Calu3 (cell line): ENCODE measurements at regions of chr6 and their contacts with region 1.

Region 1: DNA sequence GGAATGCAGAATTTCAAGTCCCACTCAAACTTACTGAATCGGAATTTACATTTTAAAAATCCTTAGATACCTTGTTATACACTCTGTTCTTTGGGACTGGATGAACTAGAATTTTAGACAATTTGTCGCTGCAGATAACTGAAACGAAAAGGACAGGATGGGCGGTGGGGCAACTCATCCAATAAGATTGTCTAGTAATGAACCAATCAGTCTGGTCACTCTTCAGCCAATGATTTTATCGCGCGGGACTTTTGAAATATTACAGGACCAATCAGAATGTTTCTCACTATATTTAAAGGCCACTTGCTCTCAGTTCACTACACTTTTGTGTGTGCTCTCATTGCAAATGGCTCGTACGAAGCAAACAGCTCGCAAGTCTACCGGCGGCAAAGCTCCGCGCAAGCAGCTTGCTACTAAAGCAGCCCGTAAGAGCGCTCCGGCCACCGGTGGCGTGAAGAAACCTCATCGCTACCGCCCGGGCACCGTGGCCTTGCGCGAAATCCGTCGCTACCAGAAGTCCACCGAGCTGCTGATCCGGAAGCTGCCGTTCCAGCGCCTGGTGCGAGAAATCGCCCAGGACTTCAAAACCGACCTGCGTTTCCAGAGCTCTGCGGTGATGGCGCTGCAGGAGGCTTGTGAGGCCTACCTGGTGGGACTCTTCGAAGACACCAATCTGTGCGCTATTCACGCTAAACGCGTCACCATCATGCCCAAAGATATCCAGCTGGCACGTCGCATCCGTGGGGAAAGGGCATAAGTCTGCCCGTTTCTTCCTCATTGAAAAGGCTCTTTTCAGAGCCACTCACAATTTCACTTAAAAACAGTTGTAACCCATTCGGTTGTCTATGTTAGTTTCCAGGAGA is 41.9 kb upstream of the HFE start:
- DNase-seq: peak; percentile 81
- H3K4me3 Mint-ChIP-seq: peak overlapping the region; percentile 81
- H3K27ac Mint-ChIP-seq: peak overlapping the region; percentile 95
- H3K4me1 Mint-ChIP-seq: peaks cover 30% of the 10 kb centered on the region
- H3K27me3 Mint-ChIP-seq: no peaks in the 10 kb centered on the region
- CTCF ChIP-seq: no peak

Region 2: GRCh38 chr6:26025894-26026832 is 19.1 kb before region 1 on chr6:
- CTCF ChIA-PET with region 1: interaction called, 24 read pairs
- intact Hi-C with region 1: no loop called
- DNase-seq: peak; percentile 98
- H3K4me3 Mint-ChIP-seq: peak overlapping the region; percentile 80
- H3K27ac Mint-ChIP-seq: peak overlapping the region; percentile 100
- H3K4me1 Mint-ChIP-seq: peaks cover 72% of the 10 kb centered on the region
- H3K27me3 Mint-ChIP-seq: peaks cover 13% of the 10 kb centered on the region
- CTCF ChIP-seq: peak; percentile 93

Region 3: GRCh38 chr6:26031595-26032339 is 13.5 kb before region 1 on chr6:
- CTCF ChIA-PET with region 1: interaction called, 24 read pairs
- intact Hi-C with region 1: no loop called
- DNase-seq: peak; percentile 95
- H3K4me3 Mint-ChIP-seq: peak overlapping the region; percentile 88
- H3K27ac Mint-ChIP-seq: peak overlapping the region; percentile 100
- H3K4me1 Mint-ChIP-seq: peaks cover 77% of the 10 kb centered on the region
- H3K27me3 Mint-ChIP-seq: peaks cover 10% of the 10 kb centered on the region
- CTCF ChIP-seq: no peak

Region 4: DNA sequence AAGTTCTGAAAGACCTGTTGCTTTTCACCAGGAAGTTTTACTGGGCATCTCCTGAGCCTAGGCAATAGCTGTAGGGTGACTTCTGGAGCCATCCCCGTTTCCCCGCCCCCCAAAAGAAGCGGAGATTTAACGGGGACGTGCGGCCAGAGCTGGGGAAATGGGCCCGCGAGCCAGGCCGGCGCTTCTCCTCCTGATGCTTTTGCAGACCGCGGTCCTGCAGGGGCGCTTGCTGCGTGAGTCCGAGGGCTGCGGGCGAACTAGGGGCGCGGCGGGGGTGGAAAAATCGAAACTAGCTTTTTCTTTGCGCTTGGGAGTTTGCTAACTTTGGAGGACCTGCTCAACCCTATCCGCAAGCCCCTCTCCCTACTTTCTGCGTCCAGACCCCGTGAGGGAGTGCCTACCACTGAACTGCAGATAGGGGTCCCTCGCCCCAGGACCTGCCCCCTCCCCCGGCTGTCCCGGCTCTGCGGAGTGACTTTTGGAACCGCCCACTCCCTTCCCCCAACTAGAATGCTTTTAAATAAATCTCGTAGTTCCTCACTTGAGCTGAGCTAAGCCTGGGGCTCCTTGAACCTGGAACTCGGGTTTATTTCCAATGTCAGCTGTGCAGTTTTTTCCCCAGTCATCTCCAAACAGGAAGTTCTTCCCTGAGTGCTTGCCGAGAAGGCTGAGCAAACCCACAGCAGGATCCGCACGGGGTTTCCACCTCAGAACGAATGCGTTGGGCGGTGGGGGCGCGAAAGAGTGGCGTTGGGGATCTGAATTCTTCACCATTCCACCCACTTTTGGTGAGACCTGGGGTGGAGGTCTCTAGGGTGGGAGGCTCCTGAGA is 42.2 kb after region 1 on chr6 and contains the start of gene HFE:
- CTCF ChIA-PET with region 1: no interaction called
- intact Hi-C with region 1: no loop called
- DNase-seq: peak; percentile 56
- H3K4me3 Mint-ChIP-seq: peak within 1 kb of the TSS; percentile 93
- H3K27ac Mint-ChIP-seq: peak within 1 kb of the TSS; percentile 87
- H3K4me1 Mint-ChIP-seq: peaks cover 23% of the 10 kb centered on the region
- H3K27me3 Mint-ChIP-seq: no peaks in the 10 kb centered on the region
- CTCF ChIP-seq: no peak
- total RNA-seq, gene HFE: 24.9 and 27.1 TPM in 2 replicates

Region 5: GRCh38 chr6:26204332-26205165 is 159.3 kb after region 1 on chr6:
- CTCF ChIA-PET with region 1: no interaction called
- intact Hi-C with region 1: loop called (anchors 5 kb)
- DNase-seq: peak; percentile 94
- H3K4me3 Mint-ChIP-seq: no peak overlapping the region
- H3K27ac Mint-ChIP-seq: no peak overlapping the region
- H3K4me1 Mint-ChIP-seq: peaks cover 19% of the 10 kb centered on the region
- H3K27me3 Mint-ChIP-seq: no peaks in the 10 kb centered on the region
- CTCF ChIP-seq: no peak